Esophagus muscularis mucosa (tissue), 4 donors: ENCODE measurements at regions of chr3 and their contacts with region 1.

Region 1: DNA sequence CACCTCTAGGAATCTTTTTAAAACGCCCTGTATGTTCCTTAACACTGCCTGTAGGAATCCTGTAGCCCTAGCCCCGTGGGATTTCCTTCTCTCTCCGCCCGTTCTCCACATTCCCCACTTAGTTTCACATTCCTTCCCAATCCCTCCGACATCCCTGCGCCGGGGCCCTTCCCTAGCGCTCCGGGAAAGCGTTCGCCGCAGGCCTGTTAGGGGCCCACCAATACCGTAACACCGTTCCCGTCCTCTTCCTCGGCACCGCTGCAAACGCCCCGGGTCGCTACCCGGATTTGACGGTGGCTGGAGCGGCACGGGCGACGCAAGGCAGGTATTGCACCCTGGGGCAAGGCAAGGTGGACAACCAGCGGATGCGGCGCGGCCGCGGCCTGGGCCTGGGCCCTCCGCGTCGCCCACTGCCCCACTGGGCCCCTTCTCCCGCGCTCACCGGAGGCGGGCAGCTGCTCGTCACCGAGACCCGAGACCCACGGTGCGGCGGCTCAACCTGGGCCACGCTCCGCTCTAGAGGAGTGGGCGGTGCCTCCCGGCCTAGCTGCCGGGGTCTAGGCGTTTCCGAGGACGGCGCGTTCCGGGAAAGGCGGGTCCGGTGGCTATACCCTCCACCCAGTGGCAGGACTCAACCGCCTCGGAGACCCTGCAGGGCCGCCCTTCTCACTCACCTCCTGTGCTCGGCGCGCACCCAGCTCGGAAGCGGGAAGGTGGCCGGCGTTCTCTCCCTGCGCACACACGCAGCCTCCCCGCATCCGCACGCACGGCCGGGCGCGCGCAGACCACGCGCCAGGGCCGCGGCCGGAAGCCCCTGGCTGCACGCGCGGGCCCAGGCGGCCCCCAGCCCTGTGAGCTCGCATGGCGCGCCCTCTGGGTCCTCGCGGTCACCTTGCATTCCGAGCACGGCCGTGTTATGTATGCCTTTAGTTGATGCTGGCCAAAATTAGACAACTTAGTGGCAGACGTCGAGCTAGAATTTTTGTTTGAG is at the start of gene B3GALNT1:
- DNase-seq: no peak
- H3K4me3 ChIP-seq: peak within 1 kb of the TSS; percentile 67 to 85 (median 78)
- H3K27ac ChIP-seq: peak within 1 kb of the TSS; percentile 62 to 83 (median 76)
- H3K4me1 ChIP-seq: peaks cover 3 to 22% (median 5%) of the 10 kb centered on the region in 4 donors
- H3K27me3 ChIP-seq: no peaks in the 10 kb centered on the region
- CTCF ChIP-seq: no peak
- EP300 ChIP-seq: no peak
- POLR2A ChIP-seq: no peak
- total RNA-seq, gene B3GALNT1: 3.7 to 6.2 (median 5.5) TPM

Region 2: DNA sequence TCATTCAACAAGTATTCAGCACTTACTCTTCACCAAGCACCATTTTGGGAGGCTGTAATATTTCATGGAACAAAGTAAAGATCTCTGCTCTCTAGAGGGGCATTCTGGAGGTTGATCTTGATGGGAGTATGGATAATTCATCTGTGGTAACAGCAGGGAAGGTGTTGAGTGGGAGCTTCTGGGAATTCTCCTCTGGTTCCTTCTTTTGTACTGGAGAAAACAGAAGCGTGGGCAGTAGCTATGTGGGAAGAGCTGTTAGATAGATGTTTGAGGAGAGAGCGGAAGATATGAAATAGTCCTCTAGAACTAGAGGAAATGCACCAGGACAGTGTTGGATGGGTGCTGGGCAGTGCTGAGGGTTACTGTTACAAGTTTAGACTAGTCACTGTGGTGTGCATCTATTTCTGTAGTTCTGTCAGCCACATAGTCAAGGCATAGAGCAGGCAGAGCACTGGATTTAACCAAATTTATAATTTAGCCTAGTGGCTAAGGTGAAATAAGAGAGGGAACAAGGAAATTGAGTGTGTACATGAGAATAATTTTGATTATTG is 125.8 kb after region 1 on chr3:
- intact Hi-C with region 1: loop called (anchors 10 kb)
- DNase-seq: no peak
- H3K4me3 ChIP-seq: no peak overlapping the region
- H3K27ac ChIP-seq: no peak overlapping the region
- H3K4me1 ChIP-seq: peaks cover 0 to 8% (median 4%) of the 10 kb centered on the region in 4 donors
- H3K27me3 ChIP-seq: no peaks in the 10 kb centered on the region
- CTCF ChIP-seq: no peak
- EP300 ChIP-seq: no peak
- POLR2A ChIP-seq: no peak